ENCODE measurements at regions of chr6 and their contacts with region 1.

Region 1: DNA sequence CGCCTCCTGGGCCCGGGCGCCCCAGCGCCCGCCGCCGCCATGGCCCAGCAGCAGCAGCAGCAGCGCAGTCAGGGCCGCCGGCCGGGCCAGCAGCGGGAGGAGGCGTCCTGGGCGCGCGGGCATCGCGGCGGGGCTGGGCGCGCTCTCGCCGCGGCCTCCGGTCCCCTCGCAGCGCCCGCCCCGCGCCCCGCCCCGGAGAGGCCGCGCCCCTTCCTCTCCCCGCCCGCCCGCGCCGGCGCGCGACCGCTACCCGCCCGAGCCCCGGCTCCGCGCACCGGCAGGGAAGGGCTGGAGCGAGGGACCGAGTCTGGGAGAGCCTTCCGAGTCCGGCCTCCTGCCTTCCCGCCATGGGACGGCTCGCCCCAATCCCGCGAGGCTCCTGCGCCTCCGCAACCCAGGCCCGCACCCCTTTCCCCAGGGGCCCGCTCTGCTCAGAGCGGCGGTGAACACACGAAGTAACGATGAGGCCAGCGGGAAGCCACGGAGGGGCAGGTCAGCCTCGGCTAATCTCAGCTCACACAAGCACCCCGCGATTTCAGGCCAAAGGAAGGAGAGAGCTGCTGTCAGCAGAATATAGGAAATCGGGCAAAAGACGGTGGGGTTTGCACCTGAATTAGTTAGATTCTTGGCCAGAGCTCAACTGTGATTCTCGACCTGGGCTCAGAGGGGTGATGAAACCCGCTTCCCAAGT is at the start of gene TXNDC5:
- DNase-seq: peak; percentile 92
- CTCF ChIP-seq: no peak

Region 2: DNA sequence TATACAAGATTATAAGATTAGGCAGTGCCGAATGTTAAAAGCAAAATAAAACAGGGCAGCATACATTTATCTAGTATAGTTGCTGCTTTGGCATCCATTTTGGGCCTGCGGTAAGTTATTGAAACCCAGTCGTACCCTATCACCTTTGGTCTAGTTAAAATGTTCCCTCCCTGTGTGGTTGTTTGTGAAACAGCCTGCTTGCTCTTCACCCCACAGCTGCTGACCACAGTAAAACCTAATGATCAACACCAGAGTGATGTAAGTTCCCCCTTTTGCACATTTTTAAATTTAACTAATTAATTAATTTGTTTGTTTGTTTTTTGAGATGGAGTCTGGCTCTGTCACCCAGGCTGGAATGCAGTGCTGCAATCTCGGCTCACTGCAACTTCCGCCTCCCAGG is 50.0 kb after region 1 on chr6:
- in situ Hi-C with region 1: loop called (anchors 10 kb)
- DNase-seq: peak; percentile 43
- CTCF ChIP-seq: no peak